Heart left ventricle (tissue), 16 donors: ENCODE measurements at regions of chr1 and their contacts with region 1.

Region 1: DNA sequence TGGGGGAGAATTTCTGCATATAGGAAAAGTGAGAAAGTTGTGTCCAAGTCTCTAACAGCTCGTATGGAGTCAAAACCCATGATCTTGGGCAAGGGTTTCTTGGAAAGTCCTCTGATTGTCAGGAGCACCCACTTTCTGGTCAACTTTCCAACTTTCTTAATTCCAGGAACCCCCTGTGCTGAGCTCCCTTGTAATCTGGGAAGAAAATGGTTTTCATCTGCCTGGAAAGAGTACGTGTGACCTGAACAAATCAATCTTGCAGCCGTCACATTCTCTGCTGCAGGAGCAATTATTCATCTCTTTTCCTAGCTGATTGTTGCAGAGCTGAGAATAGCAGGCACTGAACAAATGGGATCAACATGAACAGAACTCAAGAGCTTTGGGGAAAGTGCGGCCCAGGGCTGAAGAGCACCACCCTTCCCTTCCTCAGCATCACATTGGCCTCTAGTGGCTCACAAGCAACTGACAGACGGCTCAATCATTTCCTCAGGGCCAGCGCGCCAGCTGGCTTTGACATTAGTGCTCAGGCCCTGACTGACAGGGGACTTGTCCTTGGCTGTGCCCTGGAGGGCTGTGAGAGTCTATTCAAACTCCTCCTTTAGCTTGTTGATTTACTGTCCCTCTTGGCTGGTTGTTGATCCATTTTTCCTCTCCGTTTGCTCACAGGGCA is 295.2 kb downstream of the HLX start:
- DNase-seq: peak; percentile 76 to 87 (median 77)
- ATAC-seq: peak; percentile 99 to 100 (median 99)
- H3K4me3 ChIP-seq: no peak overlapping the region
- H3K27ac ChIP-seq: peak overlapping the region in 2 of 12 donors; percentile 37 to 50
- H3K4me1 ChIP-seq: peaks cover 0 to 15% (median 10%) of the 10 kb centered on the region in 12 donors
- H3K27me3 ChIP-seq: no peaks in the 10 kb centered on the region
- CTCF ChIP-seq: peak; percentile 27 to 67 (median 50)
- POLR2A ChIP-seq: no peak

Region 2: DNA sequence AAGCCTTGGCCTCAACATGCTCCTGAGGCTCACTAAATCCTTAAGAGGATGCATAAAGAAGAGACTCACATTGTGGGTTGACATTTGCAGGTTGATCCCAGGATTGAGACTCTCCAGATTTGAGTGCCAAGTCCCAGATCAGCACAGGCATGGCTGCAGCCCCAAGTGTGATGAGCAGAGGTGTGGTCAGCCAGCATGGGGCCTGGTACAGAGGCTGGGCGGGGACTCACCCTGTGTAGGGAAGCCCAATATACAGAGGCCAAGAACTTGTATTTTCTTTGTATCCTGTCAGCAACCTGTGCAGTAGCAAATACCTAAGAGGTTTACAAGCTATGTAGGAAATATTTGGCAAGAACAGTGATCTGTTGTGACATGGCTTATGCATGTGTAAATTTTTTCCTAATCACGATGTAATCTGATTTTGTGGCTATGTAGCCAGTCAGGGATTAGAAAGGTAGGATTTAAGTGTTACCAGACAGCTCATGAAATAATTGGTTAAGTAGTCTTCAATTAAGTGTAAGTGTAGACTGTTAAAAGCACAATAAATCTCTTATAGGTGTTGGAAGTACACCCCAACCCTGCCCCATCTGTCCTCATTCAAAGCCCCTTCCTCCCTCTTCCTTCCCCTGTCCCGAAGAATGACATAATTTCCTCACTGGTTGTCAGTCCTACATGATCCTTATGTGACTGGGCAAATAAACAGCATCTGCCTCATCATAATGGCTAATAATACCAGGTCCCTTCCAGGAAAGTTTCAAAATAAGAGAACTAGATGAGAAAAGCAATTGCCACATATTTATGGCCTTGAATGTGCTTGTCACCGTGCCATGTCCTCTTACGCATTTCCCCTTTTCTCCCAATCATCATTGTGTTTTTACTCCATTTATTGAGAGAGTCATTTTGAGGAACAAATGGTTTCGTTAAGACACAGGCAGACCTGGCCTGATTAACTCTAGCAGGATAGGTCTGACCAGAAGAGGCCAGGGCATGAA is 174.3 kb before region 1 on chr1:
- intact Hi-C with region 1: loop called in 1 of 10 experiments (anchors 5 kb)
- DNase-seq: peak in 4 of 5 donors; percentile 37 to 61 (median 46)
- ATAC-seq: peak; percentile 84 to 96 (median 86)
- H3K4me3 ChIP-seq: no peak overlapping the region
- H3K27ac ChIP-seq: peak overlapping the region in 11 of 12 donors; percentile 2 to 78 (median 48)
- H3K4me1 ChIP-seq: peaks cover 0 to 21% (median 4%) of the 10 kb centered on the region in 12 donors
- H3K27me3 ChIP-seq: no peaks in the 10 kb centered on the region
- CTCF ChIP-seq: no peak
- POLR2A ChIP-seq: no peak

Region 3: GRCh38 chr1:221035680-221036153 is 138.7 kb before region 1 on chr1:
- intact Hi-C with region 1: loop called in 1 of 10 experiments (anchors 10 kb)
- DNase-seq: peak in 1 of 5 donors; percentile 16
- ATAC-seq: peak in 3 of 4 donors; percentile 54 to 88 (median 69)
- H3K4me3 ChIP-seq: no peak overlapping the region
- H3K27ac ChIP-seq: peak overlapping the region in 2 of 12 donors; percentile 19 to 48
- H3K4me1 ChIP-seq: peaks cover 0 to 37% (median 8%) of the 10 kb centered on the region in 12 donors
- H3K27me3 ChIP-seq: no peaks in the 10 kb centered on the region
- CTCF ChIP-seq: no peak
- POLR2A ChIP-seq: no peak

Region 4: GRCh38 chr1:221117548-221117951 is 56.9 kb before region 1 on chr1:
- intact Hi-C with region 1: loop called in 1 of 10 experiments (anchors 5 kb)
- DNase-seq: peak; percentile 25 to 63 (median 55)
- ATAC-seq: peak; percentile 79 to 93 (median 90)
- H3K4me3 ChIP-seq: no peak overlapping the region
- H3K27ac ChIP-seq: peak overlapping the region; percentile 29 to 90 (median 62)
- H3K4me1 ChIP-seq: peaks cover 0 to 28% (median 24%) of the 10 kb centered on the region in 12 donors
- H3K27me3 ChIP-seq: no peaks in the 10 kb centered on the region
- CTCF ChIP-seq: no peak
- POLR2A ChIP-seq: no peak